ENCODE measurements at regions of chr12 and their contacts with region 1.

Region 1: DNA sequence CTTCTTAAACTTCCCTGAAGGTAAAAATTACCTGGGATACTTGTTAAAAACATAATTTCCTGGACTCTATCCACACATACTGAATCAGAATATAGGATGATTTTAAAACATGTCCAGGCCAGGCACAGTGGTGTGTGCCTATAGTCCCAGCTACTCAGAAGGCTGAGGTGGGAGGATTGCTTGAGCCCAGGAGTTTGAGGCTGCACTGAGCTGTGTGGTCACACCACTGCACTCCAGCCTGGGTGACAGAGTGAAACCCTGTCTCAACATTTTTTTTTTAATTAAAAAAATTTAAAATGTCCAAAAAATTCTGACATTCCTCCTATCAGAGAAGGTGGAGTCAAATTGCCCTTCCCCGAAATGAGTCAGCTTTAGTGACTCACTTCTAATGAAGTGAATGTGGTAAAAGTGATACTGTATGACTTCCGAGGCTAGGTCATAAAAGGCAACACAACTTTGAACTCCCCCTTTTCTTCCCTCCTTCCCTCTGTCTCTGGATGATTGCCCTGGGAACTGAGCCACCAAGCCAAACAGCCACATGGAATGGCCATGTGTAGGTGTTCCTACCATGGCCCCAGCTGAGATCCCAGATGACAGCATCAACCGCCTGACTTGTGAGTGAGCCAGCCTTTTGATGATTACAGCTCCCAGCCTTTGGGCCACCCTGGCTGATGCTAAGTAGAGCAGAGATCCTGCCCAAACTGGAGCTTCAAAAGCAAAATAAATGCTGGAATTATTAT is 36.3 kb downstream of the LIMA1 start:
- DNase-seq: peak; percentile 83 to 87
- ATAC-seq: peak; percentile 85 to 92 (median 86)
- H3K4me3 ChIP-seq: no peak overlapping the region
- H3K27ac ChIP-seq: peak overlapping the region; percentile 90
- H3K4me1 ChIP-seq: peaks cover 65% of the 10 kb centered on the region
- H3K27me3 ChIP-seq: no peaks in the 10 kb centered on the region
- CTCF ChIP-seq: no peak

Region 2: DNA sequence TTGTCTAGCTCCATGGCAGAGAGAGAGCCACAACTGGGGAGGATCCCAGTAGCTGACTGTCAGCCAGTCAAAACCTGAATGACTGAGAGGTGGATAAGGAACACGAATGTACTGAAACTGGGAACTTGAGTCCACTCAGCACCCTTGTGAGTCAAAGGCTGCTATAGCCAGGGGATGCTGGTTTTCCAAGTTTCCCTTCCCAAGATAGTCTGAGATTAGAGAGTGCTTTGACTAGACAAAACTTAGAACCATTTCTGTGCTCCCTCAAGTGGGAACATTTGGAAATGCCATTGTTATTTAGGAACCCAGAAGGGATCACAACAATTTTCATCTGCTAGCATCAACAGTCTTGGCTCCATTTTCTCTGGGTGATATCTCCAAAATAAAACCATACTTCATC is 1232.5 kb before region 1 on chr12:
- intact Hi-C with region 1: loop called in 1 of 2 experiments (anchors 5 kb)
- DNase-seq: no peak
- ATAC-seq: peak in 2 of 4 donors; percentile 6 to 16
- H3K4me3 ChIP-seq: no peak overlapping the region
- H3K27ac ChIP-seq: peak overlapping the region; percentile 11
- H3K4me1 ChIP-seq: peaks cover 43% of the 10 kb centered on the region
- H3K27me3 ChIP-seq: no peaks in the 10 kb centered on the region
- CTCF ChIP-seq: peak; percentile 13

Region 3: GRCh38 chr12:50283229-50283923 is 36.3 kb after region 1 on chr12 and contains the start of gene LIMA1:
- intact Hi-C with region 1: loop called in 1 of 2 experiments (anchors 5 kb)
- DNase-seq: peak; percentile 95 to 97
- ATAC-seq: peak; percentile 99
- H3K4me3 ChIP-seq: peak within 1 kb of the TSS; percentile 93
- H3K27ac ChIP-seq: peak within 1 kb of the TSS; percentile 96
- H3K4me1 ChIP-seq: peaks cover 13% of the 10 kb centered on the region
- H3K27me3 ChIP-seq: no peaks in the 10 kb centered on the region
- CTCF ChIP-seq: no peak
- total RNA-seq, gene LIMA1: 8.3 to 25.3 (median 17.5) TPM